HepG2 (cell line): ENCODE measurements at regions of chr14 and their contacts with region 1.

Region 1: DNA sequence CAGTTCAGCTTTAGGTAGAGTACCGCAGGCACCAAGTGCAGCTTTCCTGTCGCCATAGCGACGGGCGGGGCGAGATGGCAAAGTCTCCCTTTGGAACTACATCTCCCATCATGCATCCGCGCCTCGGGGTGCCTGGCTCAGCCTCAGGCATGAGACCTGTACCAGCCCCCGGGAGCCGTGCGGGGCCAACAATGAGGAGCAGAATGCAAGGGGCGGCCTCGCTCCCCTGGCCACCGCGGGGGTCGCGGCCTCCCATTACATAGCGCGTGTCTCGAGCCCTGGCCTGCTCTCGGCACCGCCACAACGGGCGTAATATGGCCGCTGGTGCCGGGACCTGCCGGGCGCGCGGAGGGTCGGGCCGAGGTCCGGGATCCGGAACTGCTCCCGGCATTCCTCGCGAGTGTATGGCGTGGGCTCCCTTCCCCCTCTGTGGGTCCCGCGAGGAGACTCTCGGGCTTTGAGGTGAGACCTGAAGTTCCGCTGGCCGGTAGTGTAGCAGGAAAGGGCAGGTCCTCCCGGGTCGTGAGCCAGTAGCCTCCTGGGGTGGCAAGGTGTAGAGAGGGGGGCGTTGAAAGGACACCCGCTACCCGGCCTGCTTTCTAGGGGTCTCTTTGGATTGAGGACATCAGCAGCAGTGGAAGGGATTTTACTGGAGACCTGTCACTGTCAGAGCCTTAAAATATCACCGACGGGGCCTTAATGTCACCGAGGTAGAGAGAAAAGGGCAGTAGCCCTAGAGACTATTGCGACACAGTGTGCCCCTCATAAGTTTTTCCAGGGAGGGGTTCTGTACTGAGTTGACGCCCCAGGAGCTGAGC is at the start of gene THTPA:
- DNase-seq: peak; percentile 96
- ATAC-seq: peak; percentile 87
- H3K4me3 ChIP-seq: peak within 1 kb of the TSS; percentile 83 to 97 (median 84)
- H3K27ac ChIP-seq: peak within 1 kb of the TSS; percentile 89
- H3K4me1 ChIP-seq: peaks cover 60% of the 10 kb centered on the region
- H3K27me3 ChIP-seq: no peaks in the 10 kb centered on the region; a peak in 1 of 5 replicates
- CTCF ChIP-seq: peak; percentile 41
- EP300 ChIP-seq: peak in 1 of 2 experiments; percentile 54; a peak in 1 of 4 replicates
- POLR2A ChIP-seq: peak in 1 of 2 experiments; percentile 93; a peak in 2 of 4 replicates
- RAD21 ChIP-seq: peak; percentile 71
- total RNA-seq, gene THTPA: 7.1 and 7.4 TPM in 2 replicates

Region 2: DNA sequence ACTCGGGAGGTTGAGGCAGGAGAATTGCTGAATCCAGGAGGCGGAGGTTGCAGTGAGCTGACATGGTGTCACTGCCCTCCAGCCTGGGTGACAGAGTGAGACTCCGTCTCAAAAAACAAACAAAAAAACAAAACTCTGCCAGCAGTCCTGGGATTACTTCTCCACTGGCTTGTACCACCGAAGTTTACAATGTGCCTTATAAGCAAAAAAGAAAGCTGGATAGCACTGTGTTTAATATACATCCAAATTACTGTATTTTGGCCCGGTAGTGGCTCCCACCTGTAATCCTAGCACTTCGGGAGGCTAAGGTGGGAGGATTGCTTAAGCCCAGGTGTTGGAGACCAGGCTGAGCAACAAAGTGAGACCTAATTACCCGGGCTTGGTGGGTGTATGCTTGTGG is 286.9 kb before region 1 on chr14:
- CTCF ChIA-PET with region 1: interaction called, 5 read pairs
- POLR2A ChIA-PET with region 1: no interaction called
- in situ Hi-C with region 1: no loop called
- intact Hi-C with region 1: loop called (anchors 5 kb)
- DNase-seq: no peak
- ATAC-seq: peak; percentile 20; the same call in 1 of the 3 replicates
- H3K4me3 ChIP-seq: no peak overlapping the region
- H3K27ac ChIP-seq: no peak overlapping the region
- H3K4me1 ChIP-seq: no peaks in the 10 kb centered on the region
- H3K27me3 ChIP-seq: peaks cover 0 to 8% of the 10 kb centered on the region in 2 experiments; a peak in 1 of 5 replicates
- CTCF ChIP-seq: no peak
- EP300 ChIP-seq: no peak
- POLR2A ChIP-seq: no peak
- RAD21 ChIP-seq: no peak

Region 3: GRCh38 chr14:23327947-23328744 is 227.9 kb before region 1 on chr14:
- CTCF ChIA-PET with region 1: interaction called, 8 read pairs
- POLR2A ChIA-PET with region 1: interaction called, 58 read pairs
- in situ Hi-C with region 1: loop called (anchors 5 kb)
- intact Hi-C with region 1: loop called (anchors 2 kb)
- DNase-seq: peak; percentile 89
- ATAC-seq: peak; percentile 75
- H3K4me3 ChIP-seq: no peak overlapping the region
- H3K27ac ChIP-seq: no peak overlapping the region
- H3K4me1 ChIP-seq: peaks cover 22% of the 10 kb centered on the region
- H3K27me3 ChIP-seq: peaks cover 0 to 20% of the 10 kb centered on the region in 2 experiments; a peak in 2 of 5 replicates
- CTCF ChIP-seq: peak; percentile 95
- EP300 ChIP-seq: no peak
- POLR2A ChIP-seq: no peak; a peak in 1 of 4 replicates
- RAD21 ChIP-seq: peak; percentile 90

Region 4: DNA sequence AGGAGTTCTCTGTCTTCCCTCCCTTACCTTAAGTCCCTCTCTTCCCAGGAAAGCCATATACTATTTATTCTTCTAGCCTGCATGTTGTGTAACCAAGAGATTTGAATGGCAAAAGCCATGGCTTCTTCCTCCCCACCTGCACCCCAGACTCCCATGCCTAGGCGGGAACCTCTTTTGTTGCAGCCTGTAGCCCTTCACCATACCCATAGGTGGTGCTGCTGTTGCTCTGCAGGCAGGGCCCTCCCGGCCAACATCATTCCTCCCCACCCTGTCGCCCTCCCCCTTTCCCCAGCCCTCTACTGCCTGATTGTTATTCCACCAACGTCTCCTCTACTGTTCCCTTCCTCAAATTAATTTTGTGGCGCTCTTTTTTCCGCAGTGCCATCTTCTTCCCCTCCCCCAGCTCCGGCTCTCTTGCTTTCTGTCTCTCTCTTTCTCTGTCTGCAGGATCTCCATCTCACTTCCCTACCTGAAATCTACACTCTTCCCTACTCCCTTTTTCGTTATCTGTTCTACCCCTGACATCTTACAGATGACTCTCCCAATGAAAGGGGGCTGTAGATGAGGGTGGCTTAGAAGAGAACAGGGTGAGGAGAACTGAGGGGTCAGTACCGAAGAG is 72.7 kb before region 1 on chr14:
- CTCF ChIA-PET with region 1: interaction called, 275 read pairs
- POLR2A ChIA-PET with region 1: interaction called, 57 read pairs
- in situ Hi-C with region 1: loop called (anchors 5 kb)
- intact Hi-C with region 1: no loop called
- DNase-seq: peak; percentile 69
- ATAC-seq: peak; percentile 96
- H3K4me3 ChIP-seq: no peak overlapping the region
- H3K27ac ChIP-seq: no peak overlapping the region
- H3K4me1 ChIP-seq: peaks cover 6% of the 10 kb centered on the region
- H3K27me3 ChIP-seq: no peaks in the 10 kb centered on the region
- CTCF ChIP-seq: peak; percentile 84
- EP300 ChIP-seq: no peak
- POLR2A ChIP-seq: no peak
- RAD21 ChIP-seq: peak; percentile 80

Region 5: DNA sequence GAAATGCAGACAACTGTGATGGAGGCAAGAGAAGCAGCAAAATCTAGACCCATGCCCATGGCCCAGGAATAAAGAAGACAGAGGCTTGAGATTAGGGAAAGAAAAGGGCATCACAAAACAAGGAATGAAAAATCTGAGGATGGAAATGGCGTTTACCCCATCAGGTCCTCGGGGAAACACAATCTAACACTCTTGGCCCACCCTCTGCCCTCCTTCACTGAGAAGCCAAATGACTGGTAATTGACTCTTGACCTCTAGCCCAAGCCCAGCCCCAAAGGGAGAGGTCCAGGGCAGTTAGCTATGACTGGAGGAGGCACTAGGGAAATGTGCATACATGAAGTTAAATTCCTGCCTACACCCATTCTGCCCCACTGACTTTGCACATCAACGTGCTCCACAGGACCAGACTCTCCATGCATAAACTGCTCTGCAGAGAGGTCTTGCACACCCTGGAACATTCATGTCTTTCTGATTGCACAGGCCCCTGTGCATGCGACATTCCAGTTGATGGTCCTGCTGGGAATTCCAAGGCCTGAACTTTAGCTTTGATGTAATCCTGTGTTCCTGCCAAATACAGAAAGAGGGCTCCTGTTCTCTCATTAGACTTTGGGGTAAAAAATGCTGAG is 10.2 kb before region 1 on chr14:
- CTCF ChIA-PET with region 1: no interaction called
- POLR2A ChIA-PET with region 1: interaction called, 11 read pairs
- in situ Hi-C with region 1: no loop called
- intact Hi-C with region 1: no loop called
- DNase-seq: peak; percentile 65
- ATAC-seq: peak; percentile 68
- H3K4me3 ChIP-seq: no peak overlapping the region
- H3K27ac ChIP-seq: no peak overlapping the region
- H3K4me1 ChIP-seq: peaks cover 64% of the 10 kb centered on the region
- H3K27me3 ChIP-seq: no peaks in the 10 kb centered on the region; a peak in 1 of 5 replicates
- CTCF ChIP-seq: no peak
- EP300 ChIP-seq: no peak
- POLR2A ChIP-seq: no peak
- RAD21 ChIP-seq: no peak

Region 6: DNA sequence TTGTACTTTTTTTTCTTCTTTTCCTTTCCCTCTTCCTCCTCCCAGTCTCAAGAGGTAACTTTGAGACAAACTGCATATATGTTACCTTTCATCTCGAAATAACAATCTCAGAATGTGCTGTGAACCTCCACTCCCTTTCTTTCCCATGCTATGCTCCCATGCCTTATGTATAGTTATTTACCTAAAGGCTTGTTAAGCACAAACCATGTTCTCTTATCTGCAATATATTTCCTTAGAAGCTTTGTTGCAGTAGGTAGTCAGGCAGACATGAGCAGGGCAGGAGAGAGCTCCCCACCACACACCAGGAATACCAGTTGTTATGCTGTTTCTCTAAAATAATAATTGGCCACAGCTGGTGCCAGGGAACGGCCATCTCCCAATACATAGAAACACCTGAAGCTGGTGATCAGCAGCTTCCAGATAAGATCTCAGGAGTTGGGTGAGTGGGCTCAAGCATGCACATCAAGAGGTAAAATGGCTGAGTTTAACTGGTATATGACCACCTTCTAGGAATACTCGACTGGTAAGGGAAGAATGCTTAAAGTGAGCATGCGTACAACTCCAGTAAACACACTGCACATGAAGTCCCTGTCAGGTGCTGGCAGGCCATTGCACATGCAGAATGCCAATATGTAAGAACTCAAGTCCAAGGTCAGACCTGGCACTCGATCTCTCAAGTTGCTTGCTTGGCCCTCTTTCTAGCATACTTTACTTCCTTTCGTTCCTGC is 65.3 kb after region 1 on chr14:
- CTCF ChIA-PET with region 1: no interaction called
- POLR2A ChIA-PET with region 1: no interaction called
- in situ Hi-C with region 1: no loop called
- intact Hi-C with region 1: no loop called
- DNase-seq: no peak
- ATAC-seq: peak; percentile 41
- H3K4me3 ChIP-seq: no peak overlapping the region
- H3K27ac ChIP-seq: no peak overlapping the region
- H3K4me1 ChIP-seq: peaks cover 44% of the 10 kb centered on the region
- H3K27me3 ChIP-seq: no peaks in the 10 kb centered on the region
- CTCF ChIP-seq: no peak
- EP300 ChIP-seq: no peak
- POLR2A ChIP-seq: no peak
- RAD21 ChIP-seq: no peak

Region 7: DNA sequence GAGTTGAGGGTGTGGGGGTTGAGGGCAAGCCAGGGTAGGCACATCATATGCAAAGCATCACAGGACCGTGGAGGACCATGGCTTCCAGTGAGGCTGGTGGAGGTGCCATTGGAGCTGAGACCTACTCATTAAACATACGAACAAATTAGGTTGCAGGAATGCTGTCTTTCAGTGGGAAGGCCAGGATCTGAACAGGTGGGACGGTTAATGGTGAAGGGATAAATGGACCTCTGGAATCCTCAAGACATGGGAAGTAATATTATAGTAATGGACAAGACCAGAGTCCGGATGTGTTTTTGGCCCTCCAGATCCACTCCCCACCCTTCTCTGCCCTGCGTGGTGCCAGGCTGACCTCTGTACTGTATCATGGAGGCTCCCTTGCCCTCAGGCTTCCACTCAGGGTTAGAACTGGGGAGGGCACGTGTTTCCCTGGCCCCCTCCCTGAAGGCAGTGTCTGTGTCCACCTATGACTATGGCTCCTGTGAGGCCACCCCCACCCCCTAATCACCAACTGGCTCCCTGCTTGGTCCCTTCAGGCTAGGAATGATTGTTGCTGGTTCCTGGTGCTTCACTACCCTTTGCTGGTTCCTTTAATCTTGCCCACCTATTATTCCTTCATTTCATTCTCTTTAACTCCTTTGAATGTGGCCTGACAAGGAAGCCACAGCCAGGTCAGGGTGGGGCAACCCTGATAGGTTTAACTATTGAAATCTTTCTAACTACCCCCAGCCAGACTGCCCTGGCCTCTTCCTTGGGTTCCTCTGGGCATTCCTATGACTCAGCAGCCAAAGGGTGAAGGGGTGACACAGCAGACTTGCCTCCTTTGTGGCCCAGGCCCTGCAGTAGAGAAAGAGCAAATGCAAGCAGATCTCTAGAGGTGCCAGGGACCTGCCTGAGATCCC is 90.8 kb after region 1 on chr14:
- CTCF ChIA-PET with region 1: no interaction called
- POLR2A ChIA-PET with region 1: no interaction called
- in situ Hi-C with region 1: no loop called
- intact Hi-C with region 1: no loop called
- DNase-seq: peak; percentile 76
- ATAC-seq: peak; percentile 4
- H3K4me3 ChIP-seq: no peak overlapping the region
- H3K27ac ChIP-seq: peak overlapping the region; percentile 3
- H3K4me1 ChIP-seq: peaks cover 27% of the 10 kb centered on the region
- H3K27me3 ChIP-seq: peaks cover 0 to 18% of the 10 kb centered on the region in 2 experiments; a peak in 1 of 5 replicates
- CTCF ChIP-seq: no peak; the same call in 1 of the 2 replicates
- EP300 ChIP-seq: 0 out of 4 replicates have a peak, but pooled peaks of 1 of the 2 experiments have one; percentile 17
- POLR2A ChIP-seq: peak in 1 of 2 experiments; percentile 97; a peak in 2 of 4 replicates
- RAD21 ChIP-seq: peak; percentile 77